Endothelial cell of umbilical vein (primary cell): ENCODE measurements at regions of chr2 and their contacts with region 1.

Region 1: DNA sequence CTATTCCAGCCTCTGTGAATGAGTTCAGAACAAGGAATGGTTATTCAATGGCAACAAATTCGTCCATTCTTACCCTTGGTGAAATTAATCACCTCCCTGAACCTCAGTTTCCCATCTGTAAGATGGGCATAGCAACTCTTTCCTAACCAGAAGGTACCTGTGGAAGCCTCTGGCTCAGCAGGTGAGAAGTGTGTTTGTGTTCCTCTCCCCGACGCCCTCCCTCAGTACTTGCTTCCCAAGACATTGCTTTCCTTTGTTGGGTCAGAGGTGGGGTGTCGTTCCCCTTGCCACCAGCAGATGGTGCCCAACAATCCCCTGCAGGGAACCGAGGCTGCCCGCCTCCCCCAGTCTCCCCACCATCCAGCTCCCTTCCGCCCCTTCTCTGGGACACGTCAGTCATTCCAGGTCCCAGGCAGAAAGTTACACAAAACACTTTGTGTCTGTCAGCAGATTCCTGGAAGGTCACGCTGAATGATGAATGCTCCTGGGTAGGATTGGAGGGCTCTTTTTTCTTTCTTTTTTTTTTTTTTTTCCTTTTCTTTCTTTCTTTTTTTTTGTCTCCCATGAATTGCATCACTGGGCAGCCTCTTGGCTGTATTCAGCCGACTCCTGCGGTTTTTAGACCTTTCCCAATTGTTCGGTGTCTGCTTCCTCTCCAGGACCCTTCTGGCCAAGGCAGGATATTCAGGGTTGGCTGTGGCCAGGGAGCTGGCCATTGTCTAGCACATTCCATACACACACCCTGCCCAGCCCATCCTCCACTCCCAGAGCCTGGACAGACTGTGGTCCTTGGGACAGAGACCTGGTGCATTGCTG is 117.3 kb downstream of the LPIN1 start:
- DNase-seq: peak; percentile 88
- H3K4me3 ChIP-seq: no peak overlapping the region
- H3K27ac ChIP-seq: no peak overlapping the region
- H3K4me1 ChIP-seq: peaks cover 7% of the 10 kb centered on the region
- H3K27me3 ChIP-seq: peaks cover 3 to 11% of the 10 kb centered on the region in 2 experiments
- CTCF ChIP-seq: peak; percentile 80 to 93
- POLR2A ChIP-seq: no peak

Region 2: DNA sequence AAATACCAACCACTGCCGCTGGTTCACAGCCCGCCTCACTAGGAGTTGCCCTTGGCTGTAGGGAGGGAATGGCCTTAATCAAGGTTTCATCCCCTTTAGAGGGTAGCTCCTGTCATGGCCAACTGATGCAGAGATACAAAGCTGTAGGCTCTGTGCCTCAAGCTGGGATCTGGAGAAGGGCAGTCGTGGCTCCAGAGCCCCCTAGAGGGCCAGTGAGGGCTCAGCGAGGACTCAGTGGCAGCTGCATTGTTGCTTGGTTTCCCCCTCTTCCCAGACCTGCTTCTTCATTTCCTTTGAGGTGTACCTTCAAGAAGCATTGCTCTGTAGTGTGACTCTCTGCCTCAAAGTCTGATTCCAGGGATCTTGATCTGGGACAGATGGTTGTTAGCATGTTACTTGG is 184.8 kb after region 1 on chr2:
- CTCF ChIA-PET with region 1: interaction called, 23 read pairs
- POLR2A ChIA-PET with region 1: no interaction called
- dilution Hi-C with region 1: no loop called
- intact Hi-C with region 1: loop called (anchors 1 kb)
- DNase-seq: peak; percentile 4
- H3K4me3 ChIP-seq: no peak overlapping the region
- H3K27ac ChIP-seq: no peak overlapping the region
- H3K4me1 ChIP-seq: no peaks in the 10 kb centered on the region
- H3K27me3 ChIP-seq: no peaks in the 10 kb centered on the region
- CTCF ChIP-seq: peak; percentile 29 to 59
- POLR2A ChIP-seq: no peak

Region 3: DNA sequence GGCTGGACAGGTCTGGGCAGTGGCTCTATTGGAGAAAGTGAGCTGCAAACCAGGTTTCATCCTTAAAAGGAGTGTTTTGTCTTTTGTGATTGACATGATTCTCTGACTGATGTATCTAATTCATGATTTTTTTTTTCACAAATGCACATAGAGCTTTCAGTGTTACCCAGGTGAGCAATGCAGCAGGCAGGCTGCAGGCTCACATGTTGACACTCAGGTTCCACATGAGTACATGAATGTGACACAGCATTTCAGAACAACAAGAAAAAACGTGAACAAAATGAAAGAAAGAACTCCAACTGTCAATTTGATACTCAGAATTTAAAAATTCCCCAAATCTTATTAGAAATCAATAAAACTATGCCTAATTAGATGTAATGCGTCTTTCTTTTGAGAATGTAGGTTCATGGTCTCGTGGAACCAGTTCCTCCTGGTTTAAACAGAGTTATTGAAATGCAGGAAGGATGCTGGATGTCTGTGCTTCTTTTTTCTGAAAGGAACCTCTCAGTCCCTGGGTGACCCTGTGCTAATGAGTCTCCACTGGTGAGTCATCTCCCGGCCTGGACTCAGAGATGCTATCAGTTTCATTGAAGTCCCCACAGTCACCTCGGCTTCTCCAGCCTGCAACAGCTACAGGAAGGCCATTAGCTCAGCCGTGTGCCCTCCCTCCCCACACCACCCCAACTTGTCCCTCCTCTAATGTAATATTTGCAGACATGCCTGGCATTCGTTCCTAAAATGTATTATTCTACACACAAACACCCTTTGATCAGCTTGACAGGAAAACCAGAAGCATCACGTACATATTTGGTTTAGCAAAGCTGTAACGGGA is 313.1 kb after region 1 on chr2:
- CTCF ChIA-PET with region 1: interaction called, 3 read pairs
- POLR2A ChIA-PET with region 1: no interaction called
- dilution Hi-C with region 1: no loop called
- intact Hi-C with region 1: loop called (anchors 1 kb)
- DNase-seq: peak; percentile 49
- H3K4me3 ChIP-seq: no peak overlapping the region
- H3K27ac ChIP-seq: peak overlapping the region; percentile 12
- H3K4me1 ChIP-seq: peaks cover 20% of the 10 kb centered on the region
- H3K27me3 ChIP-seq: no peaks in the 10 kb centered on the region
- CTCF ChIP-seq: no peak
- POLR2A ChIP-seq: no peak

Region 4: DNA sequence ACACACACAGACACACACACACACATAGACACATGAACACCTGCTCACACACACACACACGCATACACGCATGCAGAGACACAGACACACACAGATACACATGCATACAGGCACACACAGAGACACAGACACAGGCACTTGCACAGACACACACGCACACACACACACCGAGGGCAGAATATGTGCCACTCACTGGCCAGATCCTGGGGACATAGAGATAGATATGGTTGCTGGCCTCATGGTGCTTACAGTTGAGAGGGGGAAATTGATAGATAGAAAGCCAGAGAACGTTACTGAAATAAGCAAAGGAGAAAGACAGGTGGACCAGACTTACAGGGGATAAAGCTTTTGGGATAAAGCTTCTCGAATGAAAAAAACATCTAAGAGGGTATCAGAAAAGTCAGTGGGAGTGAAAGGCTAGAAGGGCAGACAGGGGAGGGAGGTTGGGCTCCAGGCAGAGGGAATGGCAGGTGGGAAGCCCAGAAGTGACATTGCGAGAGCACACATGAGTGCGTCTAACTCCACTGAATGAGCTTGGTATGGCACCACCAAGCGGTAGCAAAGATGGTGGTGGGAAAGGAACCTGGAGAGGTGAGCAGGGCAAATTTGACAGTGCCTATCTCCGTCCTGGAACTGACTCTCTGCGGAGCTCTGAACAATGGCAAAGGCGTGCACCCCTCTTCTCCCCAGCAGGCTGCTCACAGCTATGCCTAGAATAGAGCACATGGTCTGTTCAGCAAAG is 462.9 kb after region 1 on chr2:
- CTCF ChIA-PET with region 1: no interaction called
- POLR2A ChIA-PET with region 1: no interaction called
- dilution Hi-C with region 1: no loop called
- intact Hi-C with region 1: loop called (anchors 5 kb)
- DNase-seq: no peak
- H3K4me3 ChIP-seq: no peak overlapping the region
- H3K27ac ChIP-seq: no peak overlapping the region
- H3K4me1 ChIP-seq: peaks cover 8% of the 10 kb centered on the region
- H3K27me3 ChIP-seq: no peaks in the 10 kb centered on the region
- CTCF ChIP-seq: no peak
- POLR2A ChIP-seq: no peak

Region 5: DNA sequence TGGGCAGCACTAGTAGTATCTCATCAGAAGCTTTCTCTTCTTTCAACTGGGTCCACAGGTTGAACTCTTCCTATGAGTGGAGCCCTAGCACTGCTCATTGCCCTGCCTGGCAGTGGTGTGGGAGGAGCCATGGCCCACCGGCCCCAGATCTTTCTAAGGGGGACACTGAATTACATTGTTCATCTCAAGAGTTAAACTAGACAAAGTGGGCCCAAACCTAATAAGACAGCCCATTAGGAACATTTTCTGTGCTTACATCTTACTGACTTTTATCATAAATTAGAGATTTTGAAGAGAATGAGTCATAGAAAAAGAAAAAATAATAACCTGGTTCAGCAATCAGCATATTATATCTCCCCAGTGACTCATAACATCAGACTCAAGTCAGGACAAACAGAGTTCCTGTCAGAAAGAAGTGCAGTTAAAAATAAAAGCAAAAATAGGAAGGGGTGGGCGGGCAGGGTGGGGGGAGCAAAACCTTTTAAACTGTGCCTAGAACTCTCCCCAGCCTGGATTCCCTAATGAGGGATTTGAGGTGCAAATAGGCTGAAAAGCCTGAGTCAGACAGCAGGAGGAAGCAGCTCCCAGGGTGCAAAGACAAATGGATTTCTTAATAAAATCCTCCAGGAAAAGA is 691.4 kb after region 1 on chr2:
- CTCF ChIA-PET with region 1: interaction called, 3 read pairs
- POLR2A ChIA-PET with region 1: no interaction called
- dilution Hi-C with region 1: no loop called
- intact Hi-C with region 1: loop called (anchors 10 kb)
- DNase-seq: peak; percentile 85
- H3K4me3 ChIP-seq: no peak overlapping the region
- H3K27ac ChIP-seq: no peak overlapping the region
- H3K4me1 ChIP-seq: peaks cover 23% of the 10 kb centered on the region
- H3K27me3 ChIP-seq: no peaks in the 10 kb centered on the region
- CTCF ChIP-seq: no peak
- POLR2A ChIP-seq: no peak